B cell (primary cell): ENCODE measurements at regions of chr13 and their contacts with region 1.

Region 1: GRCh38 chr13:25037057-25037813 is 58.7 kb upstream of the PABPC3 start:
- DNase-seq: peak; percentile 73
- ATAC-seq: peak; percentile 68
- H3K4me3 ChIP-seq: no peak overlapping the region
- H3K4me3 Mint-ChIP-seq: no peak overlapping the region
- H3K27ac ChIP-seq: no peak overlapping the region
- H3K27ac Mint-ChIP-seq: no peak overlapping the region
- H3K4me1 ChIP-seq: peaks cover 4 to 6% of the 10 kb centered on the region in 2 donors
- H3K4me1 Mint-ChIP-seq: peaks cover 5% of the 10 kb centered on the region
- H3K27me3 ChIP-seq: peaks cover 0 to 19% (median 7%) of the 10 kb centered on the region in 4 experiments
- H3K27me3 Mint-ChIP-seq: peaks cover 55% of the 10 kb centered on the region
- CTCF ChIP-seq: peak; percentile 83

Region 2: DNA sequence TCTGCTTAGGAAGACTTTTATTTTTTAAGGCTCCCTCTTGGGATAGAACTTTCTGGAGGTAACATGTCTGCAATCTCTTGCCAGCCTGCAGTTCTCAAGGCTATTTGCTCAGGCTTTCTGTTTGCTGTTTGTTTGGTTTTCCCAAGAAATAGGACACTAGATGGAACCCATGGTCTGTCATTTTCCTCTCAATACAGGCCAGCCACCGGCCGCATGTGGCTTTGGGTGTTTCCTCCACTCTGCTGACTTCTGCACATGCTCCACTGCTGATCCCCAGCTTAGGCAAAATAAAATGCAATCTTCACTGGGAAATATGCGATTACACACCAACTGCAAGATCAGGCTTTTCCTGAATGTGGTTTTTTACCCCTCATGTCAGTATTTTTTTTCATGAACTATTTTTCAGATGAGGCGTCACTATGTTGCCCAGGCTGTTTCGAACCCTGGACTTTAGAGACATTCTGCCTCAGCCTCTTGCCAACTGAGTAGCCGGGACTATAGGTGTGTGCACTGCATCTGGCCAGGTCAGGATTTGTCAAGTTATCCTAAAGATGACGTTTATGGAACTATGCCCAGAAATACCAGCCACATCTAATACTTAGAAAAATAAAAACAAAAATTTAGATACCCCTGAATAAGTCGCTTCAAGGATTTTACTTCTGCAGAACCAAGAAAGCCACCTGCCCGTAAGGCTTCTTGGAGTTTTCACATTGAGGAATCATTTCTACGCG is 35.6 kb before region 1 on chr13:
- CTCF ChIA-PET with region 1: interaction called, 20 read pairs
- POLR2A ChIA-PET with region 1: no interaction called
- intact Hi-C with region 1: loop called (anchors 1 kb)
- DNase-seq: no peak
- ATAC-seq: no peak
- H3K4me3 ChIP-seq: no peak overlapping the region
- H3K4me3 Mint-ChIP-seq: no peak overlapping the region
- H3K27ac ChIP-seq: no peak overlapping the region
- H3K27ac Mint-ChIP-seq: no peak overlapping the region
- H3K4me1 ChIP-seq: no peaks in the 10 kb centered on the region
- H3K4me1 Mint-ChIP-seq: no peaks in the 10 kb centered on the region
- H3K27me3 ChIP-seq: peaks cover 0 to 3% (median 2%) of the 10 kb centered on the region in 4 experiments
- H3K27me3 Mint-ChIP-seq: peaks cover 37% of the 10 kb centered on the region
- CTCF ChIP-seq: no peak

Region 3: GRCh38 chr13:25018729-25019115 is 18.5 kb before region 1 on chr13:
- CTCF ChIA-PET with region 1: interaction called, 3 read pairs
- POLR2A ChIA-PET with region 1: no interaction called
- intact Hi-C with region 1: loop called (anchors 1 kb)
- DNase-seq: no peak
- ATAC-seq: no peak
- H3K4me3 ChIP-seq: peak overlapping the region in 3 of 5 experiments; percentile 36 to 60 (median 58)
- H3K4me3 Mint-ChIP-seq: peak overlapping the region; percentile 93
- H3K27ac ChIP-seq: no peak overlapping the region
- H3K27ac Mint-ChIP-seq: no peak overlapping the region
- H3K4me1 ChIP-seq: peaks cover 6 to 10% of the 10 kb centered on the region in 2 donors
- H3K4me1 Mint-ChIP-seq: peaks cover 12% of the 10 kb centered on the region
- H3K27me3 ChIP-seq: peaks cover 0 to 7% (median 0%) of the 10 kb centered on the region in 4 experiments
- H3K27me3 Mint-ChIP-seq: peaks cover 16% of the 10 kb centered on the region
- CTCF ChIP-seq: no peak

Region 4: GRCh38 chr13:25114220-25114619 is 77.0 kb after region 1 on chr13:
- CTCF ChIA-PET with region 1: interaction called, 3 read pairs
- POLR2A ChIA-PET with region 1: no interaction called
- intact Hi-C with region 1: loop called (anchors 2 kb)
- DNase-seq: peak; percentile 75
- ATAC-seq: peak; percentile 62
- H3K4me3 ChIP-seq: no peak overlapping the region
- H3K4me3 Mint-ChIP-seq: no peak overlapping the region
- H3K27ac ChIP-seq: no peak overlapping the region
- H3K27ac Mint-ChIP-seq: no peak overlapping the region
- H3K4me1 ChIP-seq: no peaks in the 10 kb centered on the region
- H3K4me1 Mint-ChIP-seq: peaks cover 2% of the 10 kb centered on the region
- H3K27me3 ChIP-seq: peaks cover 0 to 19% (median 1%) of the 10 kb centered on the region in 4 experiments
- H3K27me3 Mint-ChIP-seq: peaks cover 41% of the 10 kb centered on the region
- CTCF ChIP-seq: peak; percentile 91

Region 5: DNA sequence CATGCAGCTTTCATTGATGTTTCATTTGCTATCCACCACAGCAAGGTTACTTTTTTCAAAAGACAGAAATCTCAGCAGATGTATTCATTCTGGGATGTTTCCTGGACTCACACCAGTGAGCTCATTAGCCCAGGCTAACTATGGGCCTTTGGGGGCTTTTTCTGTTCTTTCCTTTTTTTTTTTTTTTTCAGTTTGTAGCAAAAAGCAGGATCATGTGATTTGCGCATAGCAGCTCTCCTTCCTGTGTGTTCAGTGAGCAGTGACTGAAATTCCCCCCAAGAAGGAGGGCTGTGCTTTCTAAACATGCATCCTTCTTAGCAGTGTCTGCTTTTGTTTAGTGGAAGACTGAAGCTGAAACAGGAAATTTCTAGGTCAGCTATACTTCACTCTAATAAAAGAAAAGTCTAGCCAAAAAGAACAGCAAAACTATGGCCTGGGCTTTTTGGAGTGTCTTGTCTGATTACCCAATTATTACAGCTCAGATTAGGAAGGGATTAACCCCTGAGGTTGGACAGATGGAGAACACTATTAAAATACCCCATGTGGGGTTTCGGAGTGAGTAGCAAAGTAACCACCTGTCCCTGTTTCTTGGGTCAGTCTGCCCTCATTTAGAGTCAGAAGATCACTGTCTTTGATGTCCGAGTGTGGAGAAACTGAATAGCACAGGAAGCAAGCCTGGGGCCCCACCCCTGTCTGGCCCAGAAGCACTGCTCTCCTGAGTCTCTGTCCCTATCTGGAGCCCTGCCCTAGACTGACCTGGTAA is 143.7 kb after region 1 on chr13:
- CTCF ChIA-PET with region 1: no interaction called
- POLR2A ChIA-PET with region 1: no interaction called
- intact Hi-C with region 1: no loop called
- DNase-seq: peak; percentile 48
- ATAC-seq: peak; percentile 41
- H3K4me3 ChIP-seq: no peak overlapping the region
- H3K4me3 Mint-ChIP-seq: peak overlapping the region; percentile 24
- H3K27ac ChIP-seq: peak overlapping the region in 1 of 2 donors; percentile 3
- H3K27ac Mint-ChIP-seq: peak overlapping the region; percentile 29
- H3K4me1 ChIP-seq: peaks cover 16 to 17% of the 10 kb centered on the region in 2 donors
- H3K4me1 Mint-ChIP-seq: peaks cover 35% of the 10 kb centered on the region
- H3K27me3 ChIP-seq: peaks cover 0 to 18% (median 3%) of the 10 kb centered on the region in 4 experiments
- H3K27me3 Mint-ChIP-seq: peaks cover 36% of the 10 kb centered on the region
- CTCF ChIP-seq: no peak